ENCODE measurements at regions of chr6 and their contacts with region 1.

Region 1: DNA sequence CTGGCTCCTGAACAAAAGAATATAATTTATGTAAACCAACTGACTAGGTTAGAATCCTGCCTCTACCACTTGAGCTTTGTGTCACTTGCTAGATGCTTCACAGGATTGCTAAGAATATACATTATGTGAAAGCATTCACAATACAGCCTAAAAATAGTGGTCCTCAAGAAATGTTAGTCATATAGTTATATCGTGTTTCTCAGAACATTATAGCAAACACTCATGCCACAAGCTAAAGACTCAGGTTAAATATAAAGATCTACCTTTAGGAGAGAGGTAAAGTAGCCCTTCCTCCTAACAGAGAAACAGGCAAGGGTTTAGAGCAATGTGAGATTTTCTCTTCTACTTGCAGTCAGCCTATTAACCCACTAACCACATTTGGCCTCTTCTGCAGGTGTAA is 17.8 kb upstream of the ALDH8A1 start:
- DNase-seq: no peak
- H3K4me3 ChIP-seq: no peak overlapping the region
- H3K27ac ChIP-seq: no peak overlapping the region
- H3K4me1 ChIP-seq: no peaks in the 10 kb centered on the region
- H3K27me3 ChIP-seq: no peaks in the 10 kb centered on the region
- CTCF ChIP-seq: no peak

Region 2: GRCh38 chr6:134480593-134480992 is 487.1 kb before region 1 on chr6:
- CTCF ChIA-PET with region 1: interaction called, 11 read pairs
- POLR2A ChIA-PET with region 1: no interaction called
- intact Hi-C with region 1: no loop called
- DNase-seq: no peak
- H3K4me3 ChIP-seq: no peak overlapping the region
- H3K27ac ChIP-seq: no peak overlapping the region
- H3K4me1 ChIP-seq: no peaks in the 10 kb centered on the region
- H3K27me3 ChIP-seq: no peaks in the 10 kb centered on the region
- CTCF ChIP-seq: no peak

Region 3: GRCh38 chr6:134647861-134648260 is 319.9 kb before region 1 on chr6:
- CTCF ChIA-PET with region 1: no interaction called
- POLR2A ChIA-PET with region 1: no interaction called
- intact Hi-C with region 1: no loop called
- DNase-seq: no peak
- H3K4me3 ChIP-seq: no peak overlapping the region
- H3K27ac ChIP-seq: no peak overlapping the region
- H3K4me1 ChIP-seq: peaks cover 29% of the 10 kb centered on the region
- H3K27me3 ChIP-seq: no peaks in the 10 kb centered on the region
- CTCF ChIP-seq: no peak

Region 4: GRCh38 chr6:135114355-135115145 is 146.8 kb after region 1 on chr6:
- CTCF ChIA-PET with region 1: no interaction called
- POLR2A ChIA-PET with region 1: no interaction called
- intact Hi-C with region 1: no loop called
- DNase-seq: no peak
- H3K4me3 ChIP-seq: no peak overlapping the region
- H3K27ac ChIP-seq: no peak overlapping the region
- H3K4me1 ChIP-seq: no peaks in the 10 kb centered on the region
- H3K27me3 ChIP-seq: peaks cover 3% of the 10 kb centered on the region; the same call in 1 of the 2 replicates
- CTCF ChIP-seq: no peak

Measured in PC-9 (cell line).